Activated B cell treated with CpG ODN at 0.5 μM for 24 hours (primary cell): ENCODE measurements at regions of chr16 and their contacts with region 1.

Region 1: DNA sequence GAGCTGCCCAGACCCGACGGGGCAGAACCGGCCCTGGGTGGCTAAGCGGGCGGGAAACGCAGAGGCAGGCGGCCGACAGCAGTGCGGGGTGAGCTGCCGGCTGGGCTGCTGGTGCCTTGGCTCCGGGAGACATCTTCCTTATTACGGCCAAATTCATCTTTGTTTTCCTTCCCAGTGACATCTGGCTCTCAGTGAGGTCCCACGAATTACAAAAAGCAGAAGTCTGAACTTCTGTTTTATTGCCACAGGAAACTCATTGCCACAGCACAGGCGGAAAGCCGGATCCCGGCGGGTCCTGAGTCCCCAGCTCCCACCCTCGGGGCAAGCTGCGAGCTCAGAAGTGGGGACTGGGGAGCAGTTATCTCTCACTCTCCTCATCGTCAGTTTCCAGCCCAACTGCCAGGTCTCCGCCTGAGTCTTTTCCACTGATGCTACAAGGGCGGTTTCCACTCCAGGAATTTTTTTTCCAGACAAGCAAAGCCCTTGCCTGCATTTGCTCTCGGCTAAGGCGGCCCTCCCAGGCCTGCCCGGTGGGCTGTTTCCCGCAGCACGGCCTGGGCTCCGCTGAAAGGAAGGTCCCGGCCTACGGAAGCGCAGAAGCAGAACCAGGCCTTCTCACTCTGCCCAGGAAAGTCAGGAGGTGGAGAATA is 40.3 kb downstream of the CBFA2T3 start:
- DNase-seq: no peak
- ATAC-seq: peak; percentile 25
- H3K4me3 Mint-ChIP-seq: peak overlapping the region; percentile 76
- H3K27ac Mint-ChIP-seq: peak overlapping the region; percentile 84
- H3K4me1 Mint-ChIP-seq: peaks cover 46% of the 10 kb centered on the region
- H3K27me3 Mint-ChIP-seq: no peaks in the 10 kb centered on the region
- CTCF ChIP-seq: no peak

Region 2: DNA sequence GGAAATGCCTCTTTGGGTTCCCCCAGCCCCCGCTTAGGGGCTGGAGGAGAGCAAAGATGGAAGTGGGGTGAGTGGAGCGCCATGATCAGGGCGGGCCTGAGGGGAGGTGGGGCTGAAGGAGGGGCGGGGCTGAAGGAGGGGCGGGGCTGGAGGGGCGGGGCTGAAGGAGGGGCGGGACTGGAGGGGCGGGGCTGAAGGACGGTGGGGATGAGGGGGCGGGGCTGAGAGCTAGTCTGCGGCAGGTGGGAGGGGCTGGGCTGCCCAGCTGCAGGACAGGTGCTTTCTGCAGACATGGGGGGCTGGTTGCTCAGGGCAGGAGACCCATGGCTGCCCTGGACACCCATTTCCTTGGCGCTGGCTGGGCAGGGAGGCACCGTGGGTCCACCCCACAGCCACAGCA is 31.1 kb before region 1 on chr16:
- CTCF ChIA-PET with region 1: no interaction called
- POLR2A ChIA-PET with region 1: no interaction called
- intact Hi-C with region 1: no loop called
- DNase-seq: no peak
- ATAC-seq: peak; percentile 70
- H3K4me3 Mint-ChIP-seq: no peak overlapping the region
- H3K27ac Mint-ChIP-seq: no peak overlapping the region
- H3K4me1 Mint-ChIP-seq: peaks cover 22% of the 10 kb centered on the region
- H3K27me3 Mint-ChIP-seq: no peaks in the 10 kb centered on the region
- CTCF ChIP-seq: no peak

Region 3: DNA sequence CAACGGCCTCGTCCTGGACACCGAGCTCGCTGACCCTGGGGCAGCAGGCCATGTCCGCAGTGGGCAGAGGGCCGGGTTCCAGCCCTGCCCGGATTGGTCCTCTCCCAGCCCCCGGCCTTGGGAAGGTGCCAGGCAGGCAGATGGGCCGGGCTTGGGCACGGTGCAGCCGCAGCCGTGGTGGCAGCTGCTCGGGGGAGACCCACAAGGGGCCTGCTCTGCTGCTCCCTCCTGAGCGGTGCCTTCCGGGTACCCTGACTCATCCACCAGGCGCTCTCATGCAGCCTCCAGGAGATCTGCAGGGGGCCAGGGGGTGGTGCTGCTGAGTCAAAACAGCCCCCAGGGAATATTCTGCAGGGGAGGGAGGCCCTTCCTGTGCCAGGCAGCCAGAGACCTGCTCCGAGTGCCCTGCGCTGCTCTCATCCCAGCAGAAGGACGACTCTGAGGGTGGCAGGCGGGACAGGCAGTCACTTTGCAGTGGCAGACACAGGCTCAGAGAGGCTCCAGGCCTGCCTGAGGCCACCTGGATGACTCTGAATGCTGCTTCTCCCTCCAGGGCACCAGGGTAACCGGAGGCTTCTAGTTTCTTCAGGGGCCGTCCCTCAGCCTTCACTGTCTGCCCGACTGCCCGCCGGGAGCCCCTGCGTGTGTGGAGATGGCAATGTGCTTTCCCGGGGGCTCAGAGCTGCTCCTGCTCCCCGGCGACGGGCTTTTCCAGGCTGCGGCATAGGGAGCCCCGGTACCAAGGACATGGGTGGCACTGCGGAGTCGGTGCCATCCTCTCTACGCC is 11.4 kb before region 1 on chr16:
- CTCF ChIA-PET with region 1: interaction called, 3 read pairs
- POLR2A ChIA-PET with region 1: interaction called, 4 read pairs
- intact Hi-C with region 1: loop called (anchors 1 kb)
- DNase-seq: peak; percentile 70
- ATAC-seq: peak; percentile 96
- H3K4me3 Mint-ChIP-seq: no peak overlapping the region
- H3K27ac Mint-ChIP-seq: peak overlapping the region; percentile 24
- H3K4me1 Mint-ChIP-seq: peaks cover 63% of the 10 kb centered on the region
- H3K27me3 Mint-ChIP-seq: no peaks in the 10 kb centered on the region
- CTCF ChIP-seq: no peak

Region 4: DNA sequence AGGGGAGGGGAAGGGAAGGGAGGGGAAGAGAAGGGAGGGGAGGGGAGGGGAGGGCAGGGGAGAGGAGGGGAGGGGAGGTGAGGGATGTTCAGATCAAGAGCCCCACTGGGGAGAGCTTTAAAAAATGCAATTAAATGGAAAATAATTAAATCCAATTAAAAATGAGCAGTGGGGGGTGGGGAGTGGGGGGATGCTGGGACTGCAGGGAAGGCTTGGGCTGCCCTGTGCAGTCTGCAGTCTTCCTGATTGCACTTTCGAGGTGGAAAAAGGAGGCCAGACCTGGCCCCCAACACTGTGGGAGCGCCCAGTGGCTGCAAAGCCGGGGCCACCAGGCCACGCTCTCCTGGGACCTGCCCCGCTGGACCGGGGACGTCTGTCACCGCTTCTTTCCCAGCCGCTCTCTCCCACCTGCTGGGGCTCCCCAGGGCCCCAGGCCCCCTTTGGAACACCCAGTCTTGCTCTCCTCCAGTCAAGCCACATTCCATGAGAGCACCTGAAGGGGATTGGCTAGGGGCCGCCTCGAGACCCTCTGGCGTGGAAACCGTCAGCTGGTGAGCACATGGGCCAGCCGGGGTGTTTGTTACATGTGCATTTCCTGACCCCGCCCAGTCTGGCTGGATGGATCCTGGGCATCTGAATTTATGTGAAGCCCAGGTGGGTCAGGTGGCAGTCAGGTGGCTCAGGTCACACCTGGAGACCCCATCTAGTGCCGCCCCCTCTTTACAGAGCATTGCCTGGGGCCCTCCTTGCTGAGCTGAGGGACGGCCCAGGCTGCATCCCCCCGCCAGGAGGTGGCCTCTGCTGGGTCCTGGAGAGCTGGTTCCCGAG is 77.9 kb after region 1 on chr16:
- CTCF ChIA-PET with region 1: no interaction called
- POLR2A ChIA-PET with region 1: interaction called, 10 read pairs
- intact Hi-C with region 1: no loop called
- DNase-seq: no peak
- ATAC-seq: no peak
- H3K4me3 Mint-ChIP-seq: no peak overlapping the region
- H3K27ac Mint-ChIP-seq: no peak overlapping the region
- H3K4me1 Mint-ChIP-seq: no peaks in the 10 kb centered on the region
- H3K27me3 Mint-ChIP-seq: peaks cover 25% of the 10 kb centered on the region
- CTCF ChIP-seq: no peak